ENCODE measurements at regions of chr10 and their contacts with region 1.

Region 1: DNA sequence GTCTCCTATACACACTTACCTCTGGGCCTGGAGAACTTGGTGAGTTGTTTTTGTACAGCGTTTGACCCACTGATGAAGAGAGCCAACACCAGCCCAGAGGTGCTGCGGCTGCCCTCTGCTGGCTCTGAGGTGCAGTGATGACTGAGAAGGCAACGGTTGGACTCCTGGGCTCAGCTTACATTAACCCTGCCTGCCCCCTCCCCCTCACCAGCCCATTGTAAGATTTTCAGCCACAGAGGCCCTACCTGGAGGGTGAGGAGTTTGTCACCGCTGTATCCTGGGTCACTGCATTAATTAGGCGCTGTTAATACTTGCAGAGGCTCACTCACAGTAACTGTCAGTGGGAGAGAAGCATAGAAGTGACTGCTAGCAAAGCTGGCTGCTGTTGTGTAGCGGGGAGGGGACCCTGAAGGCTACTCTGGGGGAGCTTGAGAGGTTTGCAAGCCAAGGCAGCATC is 19.0 kb upstream of the ANKRD2 start:
- DNase-seq: peak; percentile 75
- H3K4me3 Mint-ChIP-seq: no peak overlapping the region
- H3K27ac Mint-ChIP-seq: no peak overlapping the region
- H3K4me1 Mint-ChIP-seq: no peaks in the 10 kb centered on the region
- H3K27me3 Mint-ChIP-seq: no peaks in the 10 kb centered on the region

Region 2: GRCh38 chr10:97463363-97464132 is 90.1 kb before region 1 on chr10:
- CTCF ChIA-PET with region 1: interaction called, 53 read pairs
- POLR2A ChIA-PET with region 1: no interaction called
- intact Hi-C with region 1: loop called (anchors 1 kb)
- DNase-seq: peak; percentile 36
- H3K4me3 Mint-ChIP-seq: no peak overlapping the region
- H3K27ac Mint-ChIP-seq: peak overlapping the region; percentile 3
- H3K4me1 Mint-ChIP-seq: no peaks in the 10 kb centered on the region
- H3K27me3 Mint-ChIP-seq: no peaks in the 10 kb centered on the region

Region 3: GRCh38 chr10:97534746-97535367 is 18.7 kb before region 1 on chr10:
- CTCF ChIA-PET with region 1: interaction called, 115 read pairs
- POLR2A ChIA-PET with region 1: no interaction called
- intact Hi-C with region 1: loop called (anchors 1 kb)
- DNase-seq: peak; percentile 65
- H3K4me3 Mint-ChIP-seq: no peak overlapping the region
- H3K27ac Mint-ChIP-seq: no peak overlapping the region
- H3K4me1 Mint-ChIP-seq: no peaks in the 10 kb centered on the region
- H3K27me3 Mint-ChIP-seq: no peaks in the 10 kb centered on the region

Region 4: DNA sequence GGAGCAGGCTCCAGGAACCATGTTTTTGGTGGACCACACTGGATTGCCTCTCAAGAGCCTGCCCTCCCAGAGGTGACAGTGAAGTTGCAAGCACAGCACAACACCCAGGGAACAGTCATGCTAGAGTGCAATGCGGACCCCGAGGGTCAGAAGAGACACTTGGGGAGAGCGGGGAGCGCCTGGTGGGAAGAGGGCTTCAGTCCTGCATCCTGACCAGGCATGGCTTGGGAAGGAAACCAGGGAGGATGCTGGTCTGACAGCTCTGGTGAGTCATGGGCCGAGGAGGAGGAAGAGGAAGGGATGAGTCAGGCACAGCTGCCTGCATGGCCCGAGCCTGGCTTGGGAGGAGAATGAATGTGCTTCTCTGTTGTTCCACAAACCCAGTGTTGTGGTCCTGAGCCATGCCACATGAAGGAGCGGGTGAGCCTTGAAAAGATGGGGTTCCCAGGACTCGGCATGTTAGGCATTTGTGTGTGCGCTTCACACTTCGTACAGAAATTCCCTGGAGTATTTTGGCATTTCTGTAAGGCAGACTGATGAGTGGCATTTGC is 10.5 kb before region 1 on chr10:
- CTCF ChIA-PET with region 1: interaction called, 13 read pairs
- POLR2A ChIA-PET with region 1: no interaction called
- intact Hi-C with region 1: no loop called
- DNase-seq: peak; percentile 86
- H3K4me3 Mint-ChIP-seq: no peak overlapping the region
- H3K27ac Mint-ChIP-seq: peak overlapping the region; percentile 38
- H3K4me1 Mint-ChIP-seq: peaks cover 22% of the 10 kb centered on the region
- H3K27me3 Mint-ChIP-seq: peaks cover 2% of the 10 kb centered on the region

Region 5: DNA sequence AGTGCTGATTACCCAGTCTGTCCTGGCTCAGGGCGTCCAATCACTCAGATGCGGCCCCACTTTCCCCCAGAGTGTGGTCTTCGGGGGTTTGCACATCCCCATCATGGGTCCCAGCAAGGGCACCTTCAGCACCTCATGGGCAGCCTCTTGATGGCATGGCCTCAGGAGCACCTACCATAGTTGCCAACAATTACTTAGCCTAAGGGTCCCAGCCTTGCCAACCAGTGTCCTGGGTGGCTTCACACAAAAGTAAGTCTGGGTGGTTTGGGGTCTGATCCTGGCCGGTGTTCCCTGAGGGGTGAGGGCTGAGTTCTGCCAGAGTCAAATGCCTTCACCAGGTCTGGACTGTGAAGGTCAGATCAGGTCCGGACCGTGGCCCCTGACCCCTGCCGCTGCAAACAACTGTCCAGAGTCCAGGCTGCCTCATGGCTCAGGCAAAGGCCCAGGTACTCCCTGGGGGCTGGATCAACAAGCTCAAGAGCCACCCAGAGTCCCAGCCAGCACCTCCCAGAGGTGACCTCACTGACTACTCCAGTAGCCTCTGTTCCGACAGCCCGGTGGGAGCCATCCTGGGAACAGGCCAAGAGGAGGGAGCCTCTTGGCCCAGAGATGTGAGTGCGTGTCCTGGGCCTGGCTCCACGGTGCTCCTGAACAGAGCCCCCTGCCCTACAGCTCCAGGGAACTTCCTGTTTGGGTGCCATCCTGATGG is 153.7 kb after region 1 on chr10:
- CTCF ChIA-PET with region 1: no interaction called
- POLR2A ChIA-PET with region 1: no interaction called
- intact Hi-C with region 1: no loop called
- DNase-seq: no peak
- H3K4me3 Mint-ChIP-seq: no peak overlapping the region
- H3K27ac Mint-ChIP-seq: no peak overlapping the region
- H3K4me1 Mint-ChIP-seq: no peaks in the 10 kb centered on the region
- H3K27me3 Mint-ChIP-seq: peaks cover 13% of the 10 kb centered on the region

Region 6: DNA sequence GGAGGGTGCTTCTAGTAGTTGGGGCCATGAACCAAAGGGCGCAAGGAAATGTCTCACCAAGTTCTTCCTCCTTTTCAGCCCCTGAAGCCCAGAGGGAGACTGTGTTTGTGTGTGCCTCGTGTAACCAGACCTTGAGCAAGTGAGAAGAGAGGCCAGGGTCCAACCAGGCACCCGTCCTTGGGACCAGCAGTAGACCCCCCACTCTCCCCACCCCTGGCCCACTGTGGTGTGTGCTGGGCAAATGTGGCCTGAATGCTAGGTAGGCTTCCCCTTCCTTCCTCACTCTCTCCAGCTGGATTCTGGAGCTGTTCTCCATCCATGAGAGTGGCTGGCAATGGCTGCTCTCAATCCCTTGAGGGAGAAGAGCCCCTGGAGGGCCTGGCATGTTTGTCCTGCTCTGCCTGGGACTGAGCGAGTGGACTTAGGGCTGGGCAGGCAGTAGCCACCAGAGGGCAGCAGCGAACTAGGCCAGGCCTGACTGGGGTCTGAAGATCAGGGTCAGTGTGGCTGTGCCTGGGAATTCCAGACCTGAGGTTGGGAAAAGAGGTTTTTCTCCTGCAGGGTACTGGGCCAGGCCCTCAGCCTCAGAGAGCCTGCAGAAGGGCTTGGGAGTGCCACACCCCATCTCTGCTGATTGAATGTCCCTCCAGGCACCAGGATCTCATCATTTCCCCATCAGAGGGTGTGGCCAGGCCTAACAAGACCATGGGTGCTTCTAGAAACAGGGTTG is 205.7 kb after region 1 on chr10:
- CTCF ChIA-PET with region 1: no interaction called
- POLR2A ChIA-PET with region 1: no interaction called
- intact Hi-C with region 1: no loop called
- DNase-seq: peak; percentile 58
- H3K4me3 Mint-ChIP-seq: no peak overlapping the region
- H3K27ac Mint-ChIP-seq: no peak overlapping the region
- H3K4me1 Mint-ChIP-seq: no peaks in the 10 kb centered on the region
- H3K27me3 Mint-ChIP-seq: no peaks in the 10 kb centered on the region

Region 7: GRCh38 chr10:97771055-97771811 is 217.6 kb after region 1 on chr10:
- CTCF ChIA-PET with region 1: no interaction called
- POLR2A ChIA-PET with region 1: no interaction called
- intact Hi-C with region 1: no loop called
- DNase-seq: no peak
- H3K4me3 Mint-ChIP-seq: peak overlapping the region; percentile 35
- H3K27ac Mint-ChIP-seq: no peak overlapping the region
- H3K4me1 Mint-ChIP-seq: peaks cover 12% of the 10 kb centered on the region
- H3K27me3 Mint-ChIP-seq: peaks cover 32% of the 10 kb centered on the region

Measured in activated CD4-positive, alpha-beta memory T cell treated with anti-CD3 and anti-CD28 coated beads for 36 hours (primary cell).